Cardiac septum (tissue), 1 donor: ENCODE measurements at regions of chr18 and their contacts with region 1.

Region 1: DNA sequence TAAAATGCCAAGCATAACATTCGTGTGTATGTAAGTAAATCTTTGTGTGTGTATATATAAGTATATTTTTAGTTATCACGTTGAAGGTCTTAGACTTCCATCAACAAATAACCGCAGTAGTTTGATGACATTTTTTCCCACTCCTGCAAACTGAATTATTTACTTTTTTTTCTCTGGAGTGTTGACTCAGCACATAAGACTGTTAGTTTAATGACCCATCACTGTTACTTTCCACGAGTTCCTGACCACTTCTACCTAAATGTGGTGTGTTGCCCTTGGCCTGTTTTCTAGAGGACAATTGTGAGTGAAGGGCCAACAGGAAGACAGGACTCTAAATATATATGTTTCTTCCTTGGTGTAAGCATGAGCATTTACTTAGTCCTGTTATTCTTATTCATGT is 71.3 kb upstream of the TXNDC2 start:
- DNase-seq: no peak

Region 2: GRCh38 chr18:9951022-9951859 is 136.8 kb after region 1 on chr18:
- intact Hi-C with region 1: loop called (anchors 5 kb)
- DNase-seq: no peak